B cell (primary cell): ENCODE measurements at regions of chr22 and their contacts with region 1.

Region 1: GRCh38 chr22:25546751-25547150 is 17.7 kb upstream of the GRK3 start:
- DNase-seq: no peak
- ATAC-seq: peak; percentile 22
- H3K4me3 ChIP-seq: no peak overlapping the region
- H3K4me3 Mint-ChIP-seq: no peak overlapping the region
- H3K27ac ChIP-seq: no peak overlapping the region
- H3K27ac Mint-ChIP-seq: no peak overlapping the region
- H3K4me1 ChIP-seq: peaks cover 18 to 22% of the 10 kb centered on the region in 2 donors
- H3K4me1 Mint-ChIP-seq: peaks cover 41% of the 10 kb centered on the region
- H3K27me3 ChIP-seq: no peaks in the 10 kb centered on the region
- H3K27me3 Mint-ChIP-seq: no peaks in the 10 kb centered on the region
- CTCF ChIP-seq: no peak

Region 2: DNA sequence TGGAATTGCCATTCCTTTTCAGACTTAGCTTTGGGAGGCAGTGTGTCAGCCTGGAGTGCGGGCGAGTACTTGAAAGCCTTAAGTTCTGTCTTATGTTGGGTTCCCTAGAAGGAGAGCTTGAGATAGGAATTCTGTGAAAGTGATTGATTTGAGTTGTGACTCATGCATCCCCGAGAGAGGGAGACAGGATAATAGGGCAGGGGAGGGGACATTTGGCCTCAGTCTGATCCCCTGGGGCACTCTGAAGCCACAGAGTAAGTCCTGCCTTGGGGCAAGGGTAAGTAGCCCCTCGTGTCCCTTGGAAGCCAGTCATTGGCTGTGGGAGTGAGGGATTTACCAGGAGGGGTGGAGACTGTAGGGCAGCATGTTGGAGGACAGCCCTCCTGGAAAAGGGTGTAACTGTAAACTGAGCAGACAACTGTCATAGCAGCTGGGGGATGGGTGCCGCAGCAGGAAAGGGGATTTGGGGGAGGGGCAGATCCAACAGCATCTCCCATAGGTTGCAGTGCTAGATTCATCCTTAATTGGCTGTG is 550.3 kb before region 1 on chr22:
- CTCF ChIA-PET with region 1: no interaction called
- POLR2A ChIA-PET with region 1: no interaction called
- intact Hi-C with region 1: no loop called
- DNase-seq: no peak
- ATAC-seq: no peak
- H3K4me3 ChIP-seq: no peak overlapping the region
- H3K4me3 Mint-ChIP-seq: no peak overlapping the region
- H3K27ac ChIP-seq: no peak overlapping the region
- H3K27ac Mint-ChIP-seq: no peak overlapping the region
- H3K4me1 ChIP-seq: no peaks in the 10 kb centered on the region
- H3K4me1 Mint-ChIP-seq: no peaks in the 10 kb centered on the region
- H3K27me3 ChIP-seq: peaks cover 0 to 3% (median 0%) of the 10 kb centered on the region in 4 experiments
- H3K27me3 Mint-ChIP-seq: peaks cover 24% of the 10 kb centered on the region
- CTCF ChIP-seq: no peak

Region 3: DNA sequence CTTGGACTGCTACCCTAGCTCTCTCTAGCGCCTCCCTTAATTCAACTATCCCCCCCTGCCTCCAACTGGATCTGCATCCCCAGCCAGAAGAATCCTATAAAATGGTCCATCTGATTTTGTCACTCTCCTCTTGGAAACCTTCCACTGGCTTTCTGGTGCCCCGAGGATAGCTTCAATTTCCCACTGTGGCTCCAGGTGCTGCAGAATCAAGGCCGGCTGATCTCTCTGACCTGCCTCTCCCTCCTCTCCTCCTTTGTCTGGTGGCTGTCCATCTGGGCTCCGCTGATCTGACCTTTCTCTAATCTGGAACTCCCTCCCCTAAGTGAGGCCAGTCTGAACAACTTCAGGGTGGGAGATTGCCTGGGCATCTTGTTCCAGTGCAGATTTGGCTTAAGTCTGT is 11.6 kb after region 1 on chr22:
- CTCF ChIA-PET with region 1: interaction called, 72 read pairs
- POLR2A ChIA-PET with region 1: interaction called, 6 read pairs
- intact Hi-C with region 1: loop called (anchors 1 kb)
- DNase-seq: peak; percentile 16
- ATAC-seq: no peak
- H3K4me3 ChIP-seq: no peak overlapping the region
- H3K4me3 Mint-ChIP-seq: no peak overlapping the region
- H3K27ac ChIP-seq: no peak overlapping the region
- H3K27ac Mint-ChIP-seq: no peak overlapping the region
- H3K4me1 ChIP-seq: peaks cover 46 to 60% of the 10 kb centered on the region in 2 donors
- H3K4me1 Mint-ChIP-seq: peaks cover 73% of the 10 kb centered on the region
- H3K27me3 ChIP-seq: no peaks in the 10 kb centered on the region
- H3K27me3 Mint-ChIP-seq: no peaks in the 10 kb centered on the region
- CTCF ChIP-seq: no peak

Region 4: GRCh38 chr22:25623310-25623734 is 76.6 kb after region 1 on chr22:
- CTCF ChIA-PET with region 1: interaction called, 15 read pairs
- POLR2A ChIA-PET with region 1: no interaction called
- intact Hi-C with region 1: no loop called
- DNase-seq: no peak
- ATAC-seq: no peak
- H3K4me3 ChIP-seq: no peak overlapping the region
- H3K4me3 Mint-ChIP-seq: peak overlapping the region; percentile 30
- H3K27ac ChIP-seq: no peak overlapping the region
- H3K27ac Mint-ChIP-seq: peak overlapping the region; percentile 50
- H3K4me1 ChIP-seq: peaks cover 37 to 41% of the 10 kb centered on the region in 2 donors
- H3K4me1 Mint-ChIP-seq: peaks cover 64% of the 10 kb centered on the region
- H3K27me3 ChIP-seq: no peaks in the 10 kb centered on the region
- H3K27me3 Mint-ChIP-seq: no peaks in the 10 kb centered on the region
- CTCF ChIP-seq: no peak

Region 5: GRCh38 chr22:25666308-25666707 is 119.6 kb after region 1 on chr22:
- CTCF ChIA-PET with region 1: interaction called, 19 read pairs
- POLR2A ChIA-PET with region 1: no interaction called
- intact Hi-C with region 1: no loop called
- DNase-seq: no peak
- ATAC-seq: no peak
- H3K4me3 ChIP-seq: no peak overlapping the region
- H3K4me3 Mint-ChIP-seq: no peak overlapping the region
- H3K27ac ChIP-seq: no peak overlapping the region
- H3K27ac Mint-ChIP-seq: peak overlapping the region; percentile 67
- H3K4me1 ChIP-seq: peaks cover 5 to 6% of the 10 kb centered on the region in 2 donors
- H3K4me1 Mint-ChIP-seq: peaks cover 20% of the 10 kb centered on the region
- H3K27me3 ChIP-seq: no peaks in the 10 kb centered on the region
- H3K27me3 Mint-ChIP-seq: no peaks in the 10 kb centered on the region
- CTCF ChIP-seq: no peak

Region 6: DNA sequence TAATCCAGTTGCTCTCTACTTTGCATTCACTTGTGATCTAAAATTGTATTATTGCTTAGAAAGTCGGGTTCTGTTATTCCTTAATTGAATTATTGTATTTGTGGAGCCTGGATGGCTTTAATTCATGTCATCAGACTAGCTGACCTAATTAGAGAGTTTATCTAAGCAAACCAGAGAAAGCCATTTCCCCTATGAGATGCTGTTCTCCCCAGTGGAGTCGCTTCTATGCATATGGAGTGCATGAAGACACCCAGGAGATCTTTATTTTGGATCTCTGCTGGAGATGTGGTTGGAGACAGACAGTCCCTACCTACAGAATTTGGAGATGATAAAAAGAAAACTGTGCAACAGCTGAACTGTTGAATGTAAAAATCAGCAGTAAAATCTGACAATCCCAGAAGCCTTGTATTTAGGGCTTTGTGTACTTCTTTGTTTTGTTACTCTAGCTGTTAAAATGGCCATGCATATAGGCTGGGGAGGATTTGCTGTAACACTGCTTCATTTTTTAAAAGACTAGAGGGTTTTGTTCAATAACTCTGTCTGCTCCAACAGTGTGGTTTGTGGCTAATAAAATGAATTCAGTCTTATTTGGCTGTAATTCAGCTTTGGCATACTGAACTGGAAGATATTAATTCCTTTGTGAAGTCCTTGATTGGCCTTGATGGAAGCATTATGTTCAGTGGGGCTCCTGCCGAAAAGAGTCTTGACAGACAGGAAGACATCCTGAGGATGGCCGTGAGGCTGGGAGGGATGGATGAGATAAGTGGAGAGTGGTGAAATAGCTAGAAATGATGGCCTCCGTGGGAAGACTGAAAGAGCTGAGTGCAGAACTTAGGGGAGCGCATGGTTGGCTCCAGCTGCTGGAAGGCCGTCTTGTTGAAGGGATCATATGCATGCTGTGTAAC is 150.3 kb after region 1 on chr22:
- CTCF ChIA-PET with region 1: interaction called, 104 read pairs
- POLR2A ChIA-PET with region 1: no interaction called
- intact Hi-C with region 1: loop called (anchors 1 kb)
- DNase-seq: no peak
- ATAC-seq: no peak
- H3K4me3 ChIP-seq: no peak overlapping the region
- H3K4me3 Mint-ChIP-seq: no peak overlapping the region
- H3K27ac ChIP-seq: peak overlapping the region in 1 of 2 donors; percentile 3
- H3K27ac Mint-ChIP-seq: no peak overlapping the region
- H3K4me1 ChIP-seq: no peaks in the 10 kb centered on the region
- H3K4me1 Mint-ChIP-seq: peaks cover 2% of the 10 kb centered on the region
- H3K27me3 ChIP-seq: no peaks in the 10 kb centered on the region
- H3K27me3 Mint-ChIP-seq: no peaks in the 10 kb centered on the region
- CTCF ChIP-seq: no peak

Region 7: GRCh38 chr22:25726241-25726640 is 179.5 kb after region 1 on chr22:
- CTCF ChIA-PET with region 1: interaction called, 11 read pairs
- POLR2A ChIA-PET with region 1: no interaction called
- intact Hi-C with region 1: no loop called
- DNase-seq: no peak
- ATAC-seq: no peak
- H3K4me3 ChIP-seq: no peak overlapping the region
- H3K4me3 Mint-ChIP-seq: no peak overlapping the region
- H3K27ac ChIP-seq: no peak overlapping the region
- H3K27ac Mint-ChIP-seq: no peak overlapping the region
- H3K4me1 ChIP-seq: no peaks in the 10 kb centered on the region
- H3K4me1 Mint-ChIP-seq: peaks cover 8% of the 10 kb centered on the region
- H3K27me3 ChIP-seq: no peaks in the 10 kb centered on the region
- H3K27me3 Mint-ChIP-seq: no peaks in the 10 kb centered on the region
- CTCF ChIP-seq: no peak